Right ventricle myocardium superior (tissue), 1 donor: ENCODE measurements at regions of chr20 and their contacts with region 1.

Region 1: DNA sequence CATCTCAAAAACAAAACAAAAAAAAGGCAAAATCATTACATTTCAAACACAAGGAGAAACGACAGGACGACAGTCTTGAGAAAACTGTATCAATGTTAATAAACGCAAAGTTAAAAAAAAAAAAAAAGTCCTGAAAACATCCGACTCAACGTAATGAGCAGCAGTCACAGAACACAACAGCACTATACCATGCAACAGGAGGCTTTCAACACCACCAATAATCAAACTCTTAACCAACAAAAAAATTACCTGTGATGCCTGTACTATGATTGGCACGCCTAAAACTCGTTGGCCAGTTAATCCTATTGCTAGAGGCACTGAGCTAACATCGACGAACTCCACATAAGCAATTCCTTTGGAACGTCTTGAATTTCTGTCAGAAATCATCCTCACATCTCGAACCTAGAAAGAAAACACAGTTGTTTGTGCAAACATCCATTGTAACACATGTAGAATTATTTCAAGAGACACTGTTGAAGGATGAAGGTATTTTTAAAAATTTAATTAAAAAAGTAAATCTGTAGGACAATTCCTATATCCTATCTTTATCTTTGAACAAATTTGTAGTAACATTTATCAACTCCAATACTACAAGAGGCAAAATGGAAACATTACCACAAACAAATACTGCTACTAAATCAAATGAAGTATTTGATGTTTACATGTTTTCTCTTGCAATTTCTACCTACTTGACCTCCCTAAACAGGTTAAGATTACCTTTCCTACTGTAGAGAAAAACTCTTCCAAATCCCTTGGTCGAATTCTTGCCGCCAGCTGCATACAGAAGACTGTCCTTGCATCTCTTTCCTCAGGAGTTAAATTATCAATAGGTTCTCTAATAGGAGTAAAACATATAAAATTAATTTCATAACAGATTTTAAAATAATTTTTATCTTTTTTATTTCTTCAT is 17.5 kb downstream of the RBM39 start:
- DNase-seq: no peak
- ATAC-seq: no peak

Region 2: DNA sequence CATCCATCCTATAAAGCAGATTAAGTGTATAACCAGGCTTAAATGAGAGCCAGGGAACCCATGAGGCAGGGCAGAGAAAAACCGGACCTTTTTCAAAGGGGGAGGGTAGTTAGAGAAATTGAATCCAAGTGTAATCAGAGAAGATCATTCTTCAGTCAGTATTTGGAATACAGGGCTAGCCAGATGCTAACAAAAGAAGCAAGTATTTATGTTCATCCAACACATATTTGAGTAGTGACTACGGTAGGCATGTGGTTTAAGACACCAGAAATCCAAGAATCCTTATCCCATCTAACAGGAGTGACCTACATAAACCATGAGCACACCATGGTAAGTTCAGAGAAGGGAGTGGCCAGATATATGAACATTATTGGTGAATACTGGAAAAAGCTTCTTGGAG is 385.6 kb before region 1 on chr20:
- intact Hi-C with region 1: no loop called
- DNase-seq: no peak
- ATAC-seq: no peak

Region 3: GRCh38 chr20:35463455-35464300 is 260.9 kb before region 1 on chr20:
- intact Hi-C with region 1: no loop called
- DNase-seq: no peak
- ATAC-seq: peak; percentile 85

Region 4: DNA sequence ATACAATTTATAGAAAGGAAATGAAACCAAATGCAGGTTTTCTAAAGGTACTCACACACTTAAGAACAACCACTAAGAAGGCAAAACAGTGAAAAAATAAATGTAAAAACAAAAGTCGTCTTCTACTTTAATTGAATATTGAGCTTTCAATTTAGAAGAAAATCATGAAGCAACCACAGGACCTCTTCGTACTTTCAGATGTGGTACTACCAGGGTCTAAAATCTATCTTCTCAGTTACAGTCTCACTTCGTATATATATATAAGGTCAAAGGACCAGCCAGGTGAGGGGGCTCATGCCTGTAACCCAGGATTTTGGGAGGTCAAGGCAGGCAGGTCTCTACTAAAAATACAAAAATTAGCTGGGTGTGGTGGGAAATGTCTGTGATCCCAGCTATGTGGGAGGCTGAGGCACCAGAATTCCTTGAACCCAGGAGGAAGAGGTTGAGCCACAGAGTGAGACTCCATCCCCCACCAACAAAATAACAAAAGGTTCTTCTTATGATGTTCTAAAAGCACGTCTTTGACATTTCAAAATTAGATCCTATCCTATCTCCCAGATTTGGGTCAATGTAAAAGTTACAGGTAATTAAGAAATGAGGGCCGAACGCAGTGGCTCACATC is 12.9 kb before region 1 on chr20:
- intact Hi-C with region 1: loop called (anchors 2 kb)
- DNase-seq: no peak
- ATAC-seq: no peak

Region 5: GRCh38 chr20:35771689-35772562 is 47.4 kb after region 1 on chr20 and contains the start of gene PHF20:
- intact Hi-C with region 1: no loop called
- DNase-seq: peak; percentile 100
- ATAC-seq: peak; percentile 87
- total RNA-seq, gene PHF20: 37.2 TPM

Region 6: DNA sequence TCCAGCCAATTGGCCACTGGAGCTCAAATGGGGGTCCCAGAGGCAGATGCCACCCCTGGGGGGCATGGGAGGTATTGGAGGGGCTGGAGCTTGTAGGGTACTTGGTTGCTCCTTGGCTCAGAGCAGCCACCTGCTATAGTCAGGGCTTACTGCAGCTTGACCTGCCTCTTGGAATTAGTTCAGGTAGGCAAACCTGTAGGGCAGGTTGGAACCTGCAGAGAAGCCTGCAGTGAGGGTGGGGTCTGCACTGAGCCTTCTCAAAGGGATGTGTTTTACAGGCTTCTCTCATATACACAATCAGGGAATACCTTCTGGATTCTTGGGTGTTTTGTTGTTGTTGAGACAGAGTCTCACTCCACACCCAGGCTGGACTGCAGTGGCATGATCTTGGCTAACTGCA is 722.5 kb after region 1 on chr20:
- intact Hi-C with region 1: no loop called
- DNase-seq: no peak
- ATAC-seq: no peak